PC-3 (cell line): ENCODE measurements at regions of chr2 and their contacts with region 1.

Region 1: GRCh38 chr2:207676827-207677354 is 34.5 kb upstream of the CCNYL1 start:
- DNase-seq: peak; percentile 80
- ATAC-seq: peak; percentile 60
- H3K4me3 ChIP-seq: peak overlapping the region; percentile 20; the same call in 1 of the 2 replicates
- H3K27ac ChIP-seq: peak overlapping the region; percentile 53
- H3K4me1 ChIP-seq: peaks cover 13% of the 10 kb centered on the region
- H3K27me3 ChIP-seq: no peaks in the 10 kb centered on the region
- CTCF ChIP-seq: no peak

Region 2: GRCh38 chr2:207142461-207142860 is 534.4 kb before region 1 on chr2:
- CTCF ChIA-PET with region 1: no interaction called
- POLR2A ChIA-PET with region 1: interaction called, 31 read pairs
- intact Hi-C with region 1: no loop called
- DNase-seq: no peak
- ATAC-seq: 0 out of 2 replicates have a peak, but pooled peaks have one; percentile 18
- H3K4me3 ChIP-seq: no peak overlapping the region
- H3K27ac ChIP-seq: no peak overlapping the region
- H3K4me1 ChIP-seq: no peaks in the 10 kb centered on the region
- H3K27me3 ChIP-seq: no peaks in the 10 kb centered on the region
- CTCF ChIP-seq: 0 out of 2 replicates have a peak, but pooled peaks have one; percentile 12